Activated naive CD8-positive, alpha-beta T cell treated with anti-CD3 and anti-CD28 coated beads, Interleukin-2, amount 10 ng/mL, durations not matched to agents 7 days and 5 days (primary cell): ENCODE measurements at regions of chr19 and their contacts with region 1.

Region 1: GRCh38 chr19:23273590-23274413 is 23.6 kb upstream of the ZNF724 start:
- DNase-seq: peak; percentile 91
- ATAC-seq: peak; percentile 97
- H3K4me3 Mint-ChIP-seq: peak overlapping the region; percentile 94
- H3K27ac Mint-ChIP-seq: peak overlapping the region; percentile 97
- H3K4me1 Mint-ChIP-seq: peaks cover 17% of the 10 kb centered on the region
- H3K27me3 Mint-ChIP-seq: no peaks in the 10 kb centered on the region

Region 2: DNA sequence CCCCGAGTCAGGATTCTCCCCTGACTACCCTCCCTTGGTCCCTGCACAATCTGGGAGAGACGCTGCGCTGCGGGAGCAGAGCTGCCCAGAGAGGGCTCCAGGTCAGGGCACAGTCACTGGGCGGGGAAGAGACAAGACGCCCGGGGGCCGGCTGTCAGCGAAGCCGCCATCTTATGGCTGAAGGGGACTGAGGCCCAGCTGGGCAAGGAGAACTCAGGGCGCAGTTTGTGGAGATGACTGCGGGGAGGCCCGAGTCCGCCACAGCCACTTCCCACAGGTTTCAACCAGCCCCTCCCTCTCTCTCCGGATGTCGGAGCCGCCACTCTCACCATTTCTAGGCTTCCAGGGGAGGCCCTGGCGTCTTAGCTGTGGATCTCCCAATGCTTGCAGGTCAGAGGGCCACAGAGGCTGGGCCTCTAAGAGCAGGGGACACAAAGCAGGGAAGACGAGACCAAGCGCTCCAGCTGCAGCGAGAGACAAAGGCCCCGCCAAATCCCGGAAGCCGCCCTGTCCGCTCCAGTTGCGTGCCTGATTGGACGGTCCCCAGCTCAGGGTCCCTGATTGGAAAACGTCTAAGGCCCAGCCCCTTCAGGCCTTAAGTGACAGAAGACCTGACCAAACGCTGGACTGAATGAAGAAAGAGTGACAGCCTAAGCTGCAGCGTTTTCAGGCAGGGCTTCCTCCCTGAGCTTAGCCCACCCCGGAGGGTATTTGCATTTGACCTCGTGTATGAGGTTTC is 23.7 kb before region 1 on chr19 and contains the start of gene ZNF724:
- POLR2A ChIA-PET with region 1: interaction called, 48 read pairs
- DNase-seq: peak; percentile 85
- ATAC-seq: peak; percentile 99
- H3K4me3 Mint-ChIP-seq: peak within 1 kb of the TSS; percentile 91
- H3K27ac Mint-ChIP-seq: peak within 1 kb of the TSS; percentile 95
- H3K4me1 Mint-ChIP-seq: peaks cover 10% of the 10 kb centered on the region
- H3K27me3 Mint-ChIP-seq: no peaks in the 10 kb centered on the region
- total RNA-seq, gene ZNF724: 13.6 to 13.8 TPM